Transverse colon (tissue), 4 donors: ENCODE measurements at regions of chr1 and their contacts with region 1.

Region 1: GRCh38 chr1:6727535-6727934 is 25.9 kb upstream of the DNAJC11 start:
- DNase-seq: peak; percentile 61
- H3K4me3 ChIP-seq: no peak overlapping the region
- H3K27ac ChIP-seq: no peak overlapping the region
- H3K4me1 ChIP-seq: peaks cover 0 to 14% (median 4%) of the 10 kb centered on the region in 4 donors
- H3K27me3 ChIP-seq: no peaks in the 10 kb centered on the region
- CTCF ChIP-seq: peak; percentile 76 to 93 (median 90)
- EP300 ChIP-seq: no peak
- POLR2A ChIP-seq: no peak

Region 2: DNA sequence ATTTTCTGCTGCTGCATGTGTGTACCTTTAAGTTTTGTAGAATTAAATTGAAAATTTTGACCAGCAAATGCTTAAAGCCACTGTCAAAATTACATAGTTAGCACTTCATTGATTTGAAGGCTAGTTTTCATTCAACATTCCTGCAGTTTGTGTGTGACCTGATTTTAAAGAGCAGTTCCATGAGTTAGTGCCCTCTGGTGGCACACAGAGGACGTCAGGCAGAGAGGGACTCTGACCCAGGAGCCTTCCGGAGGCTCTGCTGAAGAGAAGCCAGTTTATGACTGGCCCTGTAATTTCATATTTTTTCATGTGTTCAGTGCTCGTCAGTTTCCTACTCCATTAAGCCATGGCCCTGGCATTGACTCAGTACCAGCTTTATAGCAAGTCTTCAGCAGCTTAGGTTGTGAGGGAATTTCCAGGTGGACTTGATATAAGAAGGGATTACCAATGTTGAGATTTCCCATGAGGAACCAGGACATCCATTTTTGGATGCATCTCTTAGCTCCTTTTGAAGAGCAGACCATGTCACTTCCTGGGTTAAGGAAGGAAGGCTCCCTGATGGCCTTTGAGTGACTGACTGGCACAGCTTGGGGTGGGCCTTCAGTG is 162.4 kb after region 1 on chr1:
- in situ Hi-C with region 1: loop called in 1 of 4 experiments (anchors 25 kb)
- intact Hi-C with region 1: loop called (anchors 10 kb)
- DNase-seq: peak; percentile 72
- H3K4me3 ChIP-seq: no peak overlapping the region
- H3K27ac ChIP-seq: no peak overlapping the region
- H3K4me1 ChIP-seq: peaks cover 0 to 7% (median 2%) of the 10 kb centered on the region in 4 donors
- H3K27me3 ChIP-seq: no peaks in the 10 kb centered on the region
- CTCF ChIP-seq: peak; percentile 69 to 86 (median 76)
- EP300 ChIP-seq: no peak
- POLR2A ChIP-seq: no peak

Region 3: GRCh38 chr1:7070389-7071029 is 343.0 kb after region 1 on chr1:
- in situ Hi-C with region 1: loop called (anchors 10 to 25 kb)
- intact Hi-C with region 1: loop called (anchors 10 kb)
- DNase-seq: peak; percentile 57
- H3K4me3 ChIP-seq: peak overlapping the region in 2 of 4 donors; percentile 10 to 38
- H3K27ac ChIP-seq: no peak overlapping the region
- H3K4me1 ChIP-seq: peaks cover 0 to 9% (median 5%) of the 10 kb centered on the region in 4 donors
- H3K27me3 ChIP-seq: peaks cover 16% of the 10 kb centered on the region
- CTCF ChIP-seq: peak; percentile 71 to 85 (median 81)
- EP300 ChIP-seq: no peak
- POLR2A ChIP-seq: no peak

Region 4: DNA sequence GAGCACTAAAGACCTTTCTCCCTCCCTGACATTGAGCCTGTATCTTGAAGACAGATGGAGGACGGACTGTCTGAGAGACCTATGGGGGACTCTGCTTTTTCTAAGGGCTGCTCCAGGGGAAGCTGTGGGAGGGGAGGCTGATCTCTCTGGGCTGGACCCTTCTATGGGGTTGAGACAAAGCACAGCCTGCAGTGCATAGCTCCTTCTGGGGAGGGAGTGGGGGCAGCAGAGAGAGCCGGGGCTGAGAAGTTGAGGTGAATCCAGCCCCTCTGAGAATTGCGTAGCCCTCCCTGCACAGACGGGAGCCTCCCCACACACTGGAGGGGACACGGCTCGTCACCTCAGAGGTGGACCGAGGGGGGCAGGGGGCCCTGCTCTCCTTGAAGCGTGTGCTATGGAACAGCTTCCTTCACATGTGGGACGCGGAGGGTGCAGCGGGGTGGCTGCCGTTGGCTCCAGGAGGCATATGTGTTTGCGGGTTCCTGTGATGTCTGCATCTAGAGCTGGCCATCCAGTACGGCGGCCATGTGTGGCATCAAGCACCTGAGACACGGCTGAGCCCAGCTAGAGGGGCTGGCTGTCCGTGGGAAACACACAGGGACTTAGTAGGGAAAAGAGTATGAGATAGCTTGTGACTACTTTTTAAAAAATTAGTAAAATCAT is 356.8 kb after region 1 on chr1:
- in situ Hi-C with region 1: loop called in 2 of 4 experiments (anchors 10 to 25 kb)
- intact Hi-C with region 1: loop called (anchors 10 kb)
- DNase-seq: no peak
- H3K4me3 ChIP-seq: no peak overlapping the region
- H3K27ac ChIP-seq: no peak overlapping the region
- H3K4me1 ChIP-seq: no peaks in the 10 kb centered on the region
- H3K27me3 ChIP-seq: no peaks in the 10 kb centered on the region
- CTCF ChIP-seq: no peak
- EP300 ChIP-seq: no peak
- POLR2A ChIP-seq: no peak

Region 5: DNA sequence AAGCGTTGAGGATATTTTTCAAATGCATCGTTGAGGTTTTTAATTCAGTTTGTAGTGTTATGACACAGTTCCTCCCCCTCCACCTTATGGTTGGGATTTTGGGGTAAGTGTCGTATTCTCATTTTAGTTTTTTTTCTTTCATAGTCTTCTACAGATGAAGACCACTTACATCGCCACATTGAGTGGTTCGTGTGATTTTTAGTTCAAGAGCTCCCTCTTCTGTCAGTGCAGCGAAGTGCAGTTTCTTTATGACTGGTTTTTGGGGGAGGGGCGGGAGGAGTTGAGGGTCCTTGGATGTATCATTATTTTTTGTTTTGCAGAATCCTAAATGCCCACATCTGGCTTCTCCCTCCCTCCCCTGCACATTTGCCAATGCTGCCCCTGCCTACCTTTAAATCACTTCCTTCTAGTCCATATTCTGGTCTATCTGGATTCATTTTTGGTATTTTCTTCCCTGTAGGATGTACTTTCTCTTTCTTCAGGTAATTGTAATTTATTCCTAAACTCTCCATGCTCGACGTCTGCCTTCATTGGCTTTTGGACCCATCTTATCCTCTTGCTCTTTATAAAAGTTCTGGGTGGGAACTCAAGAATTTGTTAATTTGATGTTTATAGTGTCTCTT is 490.8 kb after region 1 on chr1:
- in situ Hi-C with region 1: loop called (anchors 10 to 25 kb)
- intact Hi-C with region 1: no loop called
- DNase-seq: peak; percentile 26
- H3K4me3 ChIP-seq: no peak overlapping the region
- H3K27ac ChIP-seq: no peak overlapping the region
- H3K4me1 ChIP-seq: no peaks in the 10 kb centered on the region
- H3K27me3 ChIP-seq: peaks cover 7% of the 10 kb centered on the region
- CTCF ChIP-seq: peak; percentile 57 to 75 (median 70)
- EP300 ChIP-seq: no peak
- POLR2A ChIP-seq: no peak